ENCODE measurements at regions of chr3 and their contacts with region 1.

Region 1: DNA sequence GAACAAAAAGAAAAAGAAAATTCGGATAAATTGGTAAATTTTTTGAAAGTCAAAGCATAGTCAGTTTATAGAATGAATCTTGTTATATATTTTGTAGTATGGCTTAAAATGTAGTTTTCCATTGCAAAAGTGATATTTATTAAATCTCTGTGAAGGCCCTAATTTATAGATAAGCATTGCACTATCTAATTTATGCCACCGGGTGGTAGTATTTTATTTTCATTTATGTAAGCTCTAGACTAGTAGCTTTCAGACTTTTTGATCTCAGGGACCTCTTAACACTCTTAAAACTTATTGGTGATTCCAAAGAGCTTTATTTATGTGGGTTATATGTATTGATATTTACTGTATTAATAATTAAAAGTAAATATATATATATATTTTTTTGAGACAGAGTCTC is 133.9 kb upstream of the LRRFIP2 start:
- DNase-seq: peak in 2 of 9 experiments; percentile 21 to 36
- ATAC-seq: peak; percentile 57
- H3K4me3 ChIP-seq: no peak overlapping the region
- H3K4me3 Mint-ChIP-seq: no peak overlapping the region
- H3K27ac ChIP-seq: no peak overlapping the region
- H3K27ac Mint-ChIP-seq: no peak overlapping the region
- H3K4me1 ChIP-seq: peaks cover 14% of the 10 kb centered on the region
- H3K4me1 Mint-ChIP-seq: peaks cover 27% of the 10 kb centered on the region
- H3K27me3 ChIP-seq: no peaks in the 10 kb centered on the region
- H3K27me3 Mint-ChIP-seq: no peaks in the 10 kb centered on the region
- CTCF ChIP-seq: peak; percentile 66

Region 2: GRCh38 chr3:37347941-37348340 is 39.7 kb after region 1 on chr3:
- CTCF ChIA-PET with region 1: no interaction called
- POLR2A ChIA-PET with region 1: no interaction called
- intact Hi-C with region 1: no loop called
- DNase-seq: no peak
- ATAC-seq: no peak
- H3K4me3 ChIP-seq: no peak overlapping the region
- H3K4me3 Mint-ChIP-seq: no peak overlapping the region
- H3K27ac ChIP-seq: no peak overlapping the region
- H3K27ac Mint-ChIP-seq: no peak overlapping the region
- H3K4me1 ChIP-seq: no peaks in the 10 kb centered on the region
- H3K4me1 Mint-ChIP-seq: no peaks in the 10 kb centered on the region
- H3K27me3 ChIP-seq: no peaks in the 10 kb centered on the region
- H3K27me3 Mint-ChIP-seq: no peaks in the 10 kb centered on the region
- CTCF ChIP-seq: no peak

Region 3: GRCh38 chr3:37453393-37454389 is 145.4 kb after region 1 on chr3:
- CTCF ChIA-PET with region 1: no interaction called
- POLR2A ChIA-PET with region 1: no interaction called
- intact Hi-C with region 1: no loop called
- DNase-seq: no peak
- ATAC-seq: no peak
- H3K4me3 ChIP-seq: no peak overlapping the region
- H3K4me3 Mint-ChIP-seq: peak overlapping the region; percentile 37
- H3K27ac ChIP-seq: no peak overlapping the region
- H3K27ac Mint-ChIP-seq: no peak overlapping the region
- H3K4me1 ChIP-seq: peaks cover 6% of the 10 kb centered on the region
- H3K4me1 Mint-ChIP-seq: peaks cover 13% of the 10 kb centered on the region
- H3K27me3 ChIP-seq: peaks cover 9 to 15% of the 10 kb centered on the region in 2 experiments
- H3K27me3 Mint-ChIP-seq: peaks cover 66% of the 10 kb centered on the region
- CTCF ChIP-seq: no peak

Region 4: GRCh38 chr3:37814547-37814946 is 506.3 kb after region 1 on chr3:
- CTCF ChIA-PET with region 1: no interaction called
- POLR2A ChIA-PET with region 1: no interaction called
- intact Hi-C with region 1: loop called in 1 of 2 experiments (anchors 10 kb)
- DNase-seq: no peak
- ATAC-seq: no peak
- H3K4me3 ChIP-seq: no peak overlapping the region
- H3K4me3 Mint-ChIP-seq: no peak overlapping the region
- H3K27ac ChIP-seq: no peak overlapping the region
- H3K27ac Mint-ChIP-seq: no peak overlapping the region
- H3K4me1 ChIP-seq: no peaks in the 10 kb centered on the region
- H3K4me1 Mint-ChIP-seq: no peaks in the 10 kb centered on the region
- H3K27me3 ChIP-seq: no peaks in the 10 kb centered on the region
- H3K27me3 Mint-ChIP-seq: peaks cover 5% of the 10 kb centered on the region
- CTCF ChIP-seq: no peak

Region 5: GRCh38 chr3:38168151-38169026 is 860.1 kb after region 1 on chr3:
- CTCF ChIA-PET with region 1: no interaction called
- POLR2A ChIA-PET with region 1: no interaction called
- intact Hi-C with region 1: no loop called
- DNase-seq: no peak
- ATAC-seq: no peak
- H3K4me3 ChIP-seq: no peak overlapping the region
- H3K4me3 Mint-ChIP-seq: no peak overlapping the region
- H3K27ac ChIP-seq: no peak overlapping the region
- H3K27ac Mint-ChIP-seq: no peak overlapping the region
- H3K4me1 ChIP-seq: peaks cover 32% of the 10 kb centered on the region
- H3K4me1 Mint-ChIP-seq: peaks cover 74% of the 10 kb centered on the region
- H3K27me3 ChIP-seq: no peaks in the 10 kb centered on the region
- H3K27me3 Mint-ChIP-seq: no peaks in the 10 kb centered on the region
- CTCF ChIP-seq: no peak